Esophagus muscularis mucosa (tissue), 4 donors: ENCODE measurements at regions of chr17 and their contacts with region 1.

Region 1: DNA sequence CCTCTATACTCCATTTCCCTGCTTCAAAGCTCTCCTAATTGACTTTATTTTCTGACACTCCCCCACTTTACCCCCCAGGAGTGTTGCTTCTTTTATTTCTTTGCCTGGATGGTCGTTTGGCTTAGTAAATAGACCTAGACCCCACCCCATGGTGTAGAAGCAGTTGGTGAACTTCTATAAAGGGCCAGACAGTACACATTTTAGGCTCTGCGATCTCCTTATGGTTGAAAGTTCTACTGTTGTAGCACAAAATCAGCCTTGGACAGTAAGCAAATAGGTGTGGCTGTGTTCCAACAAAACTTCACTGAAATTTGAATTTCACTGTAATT is 31.9 kb downstream of the ZNF287 start:
- DNase-seq: no peak
- H3K4me3 ChIP-seq: no peak overlapping the region
- H3K27ac ChIP-seq: peak overlapping the region in 3 of 4 donors; percentile 89 to 94 (median 91)
- H3K4me1 ChIP-seq: peaks cover 4 to 18% (median 11%) of the 10 kb centered on the region in 4 donors
- H3K27me3 ChIP-seq: peaks cover 0 to 8% (median 0%) of the 10 kb centered on the region in 4 donors
- CTCF ChIP-seq: no peak
- EP300 ChIP-seq: no peak
- POLR2A ChIP-seq: no peak

Region 2: DNA sequence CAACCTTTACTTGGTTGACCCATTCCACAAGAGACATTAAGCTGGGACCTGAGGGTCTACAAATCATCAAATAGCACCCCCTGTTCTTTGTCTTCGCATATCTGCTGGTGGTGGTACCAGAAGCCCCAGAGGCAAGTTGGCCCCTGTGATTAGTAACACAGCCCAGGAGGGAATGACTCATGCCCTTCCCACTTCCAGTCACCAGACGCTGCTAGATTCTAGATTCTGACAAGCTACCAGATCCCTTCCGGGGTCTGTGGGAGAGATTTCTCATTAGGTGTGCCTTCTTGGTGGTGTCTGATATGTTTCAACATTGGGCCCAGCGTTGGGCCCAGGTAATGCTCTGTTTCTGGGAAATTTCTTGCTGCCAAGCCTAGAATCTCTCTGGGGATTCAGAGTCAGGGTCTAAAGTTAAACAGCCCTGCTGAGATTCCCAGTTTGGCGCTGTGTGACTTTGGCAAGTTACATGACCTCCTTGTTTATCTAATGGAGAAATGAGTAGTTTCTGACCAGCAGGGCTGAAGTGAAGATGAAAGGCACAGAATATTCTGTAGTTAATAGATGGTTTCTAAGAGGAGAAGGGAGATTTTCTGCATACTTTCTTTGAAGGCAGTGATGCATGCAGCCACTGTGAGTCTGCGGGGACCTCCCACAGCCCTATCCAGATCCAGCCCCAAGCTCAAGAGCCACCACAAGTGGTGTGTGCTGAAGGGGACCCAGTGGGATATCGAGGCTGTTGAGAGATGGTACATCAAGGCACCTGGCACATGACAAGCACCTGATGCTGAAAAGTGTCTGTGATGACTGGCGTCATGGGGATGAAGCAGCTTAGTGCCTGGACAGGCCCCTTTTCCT is 117.8 kb before region 1 on chr17:
- intact Hi-C with region 1: no loop called
- DNase-seq: no peak
- H3K4me3 ChIP-seq: no peak overlapping the region
- H3K27ac ChIP-seq: peak overlapping the region; percentile 59 to 80 (median 70)
- H3K4me1 ChIP-seq: peaks cover 13 to 50% (median 42%) of the 10 kb centered on the region in 4 donors
- H3K27me3 ChIP-seq: peaks cover 0 to 6% (median 0%) of the 10 kb centered on the region in 4 donors
- CTCF ChIP-seq: no peak
- EP300 ChIP-seq: no peak
- POLR2A ChIP-seq: no peak

Region 3: GRCh38 chr17:16589097-16589969 is 52.2 kb after region 1 on chr17:
- intact Hi-C with region 1: loop called (anchors 5 kb)
- DNase-seq: peak; percentile 96
- H3K4me3 ChIP-seq: peak overlapping the region; percentile 60 to 74 (median 71)
- H3K27ac ChIP-seq: peak overlapping the region; percentile 76 to 84 (median 80)
- H3K4me1 ChIP-seq: peaks cover 8 to 16% (median 11%) of the 10 kb centered on the region in 4 donors
- H3K27me3 ChIP-seq: no peaks in the 10 kb centered on the region
- CTCF ChIP-seq: peak; percentile 99 to 100 (median 99)
- EP300 ChIP-seq: no peak
- POLR2A ChIP-seq: no peak

Region 4: GRCh38 chr17:16991349-16992009 is 454.4 kb after region 1 on chr17:
- intact Hi-C with region 1: loop called (anchors 2 kb)
- DNase-seq: no peak
- H3K4me3 ChIP-seq: no peak overlapping the region
- H3K27ac ChIP-seq: no peak overlapping the region
- H3K4me1 ChIP-seq: peaks cover 0 to 14% (median 10%) of the 10 kb centered on the region in 4 donors
- H3K27me3 ChIP-seq: no peaks in the 10 kb centered on the region
- CTCF ChIP-seq: peak; percentile 55 to 81 (median 65)
- EP300 ChIP-seq: no peak
- POLR2A ChIP-seq: no peak